ENCODE measurements at regions of chr6 and their contacts with region 1.

Region 1: GRCh38 chr6:107847844-107848802 is 24.0 kb upstream of the SCML4 start:
- DNase-seq: peak; percentile 86
- H3K4me3 Mint-ChIP-seq: peak overlapping the region; percentile 76
- H3K27ac Mint-ChIP-seq: peak overlapping the region; percentile 67
- H3K4me1 Mint-ChIP-seq: peaks cover 21% of the 10 kb centered on the region
- H3K27me3 Mint-ChIP-seq: no peaks in the 10 kb centered on the region

Region 2: DNA sequence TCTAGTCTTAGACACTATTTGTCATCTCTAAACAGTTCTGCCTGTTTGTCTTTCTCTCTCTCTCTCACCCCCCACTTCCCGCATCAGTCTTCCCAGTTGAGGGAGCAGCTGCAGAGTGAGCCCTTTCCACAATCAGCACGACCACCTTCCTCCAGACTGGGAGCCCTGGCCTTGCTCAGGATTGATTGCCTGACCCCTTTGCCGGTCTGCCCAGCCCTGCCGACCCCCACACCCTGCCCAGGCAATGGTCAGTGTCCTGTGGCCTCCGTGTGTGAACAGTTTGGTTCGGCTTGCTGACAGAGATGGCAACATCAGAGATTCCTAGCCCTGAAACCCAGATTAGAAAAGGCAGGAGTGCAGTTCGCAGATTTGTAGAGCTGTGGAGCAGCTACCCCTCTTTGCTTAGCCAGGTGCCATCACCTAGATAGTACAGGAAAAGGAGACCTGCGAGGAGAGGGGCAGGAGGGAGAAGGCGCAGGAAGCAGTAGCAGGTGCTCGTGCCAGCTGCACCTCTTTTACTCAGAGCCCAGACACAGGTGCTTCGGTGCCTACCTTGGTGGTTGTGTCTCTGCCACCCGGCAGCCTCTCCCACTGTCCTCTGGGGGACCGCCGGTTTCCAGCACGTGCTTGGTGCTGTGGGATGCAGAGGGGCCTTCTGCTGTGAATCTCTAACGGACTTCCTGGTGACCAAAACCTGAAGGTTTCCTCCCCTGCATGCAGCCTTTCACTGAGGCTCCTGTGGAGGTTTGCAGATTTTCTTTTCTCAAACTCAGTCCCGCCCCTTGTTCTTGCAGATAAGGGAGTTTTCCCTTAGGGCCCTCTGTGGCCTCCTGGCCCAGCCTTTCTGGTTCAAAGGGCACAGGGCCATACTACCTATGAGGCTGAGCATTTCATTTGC is 116.5 kb before region 1 on chr6:
- CTCF ChIA-PET with region 1: interaction called, 89 read pairs
- intact Hi-C with region 1: loop called (anchors 1 kb)
- DNase-seq: peak; percentile 43
- H3K4me3 Mint-ChIP-seq: peak overlapping the region; percentile 80
- H3K27ac Mint-ChIP-seq: peak overlapping the region; percentile 86
- H3K4me1 Mint-ChIP-seq: peaks cover 74% of the 10 kb centered on the region
- H3K27me3 Mint-ChIP-seq: no peaks in the 10 kb centered on the region

Region 3: DNA sequence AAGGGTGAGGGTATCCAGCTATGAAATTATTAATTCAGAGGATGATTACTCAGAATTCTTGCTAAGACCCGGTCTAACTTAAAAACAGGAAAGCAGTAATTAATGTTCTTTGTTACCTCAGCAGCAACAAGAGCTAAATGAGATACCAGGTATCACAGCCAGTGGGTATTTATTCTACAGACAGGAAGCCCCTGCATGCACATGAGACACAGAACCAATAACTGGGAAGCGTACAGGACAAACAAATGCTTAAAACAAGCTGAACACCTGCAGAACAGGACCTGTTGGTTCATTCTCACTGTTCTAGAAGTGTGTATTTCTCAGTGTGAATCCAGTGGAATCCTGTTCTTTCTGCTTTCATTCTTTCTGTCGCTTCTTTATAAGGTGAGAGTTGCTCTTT is 54.9 kb before region 1 on chr6:
- CTCF ChIA-PET with region 1: interaction called, 33 read pairs
- intact Hi-C with region 1: no loop called
- DNase-seq: no peak
- H3K4me3 Mint-ChIP-seq: peak overlapping the region; percentile 2
- H3K27ac Mint-ChIP-seq: no peak overlapping the region
- H3K4me1 Mint-ChIP-seq: peaks cover 72% of the 10 kb centered on the region
- H3K27me3 Mint-ChIP-seq: no peaks in the 10 kb centered on the region

Region 4: GRCh38 chr6:107806691-107807090 is 41.4 kb before region 1 on chr6:
- CTCF ChIA-PET with region 1: interaction called, 28 read pairs
- intact Hi-C with region 1: no loop called
- DNase-seq: no peak
- H3K4me3 Mint-ChIP-seq: no peak overlapping the region
- H3K27ac Mint-ChIP-seq: no peak overlapping the region
- H3K4me1 Mint-ChIP-seq: peaks cover 76% of the 10 kb centered on the region
- H3K27me3 Mint-ChIP-seq: no peaks in the 10 kb centered on the region

Region 5: DNA sequence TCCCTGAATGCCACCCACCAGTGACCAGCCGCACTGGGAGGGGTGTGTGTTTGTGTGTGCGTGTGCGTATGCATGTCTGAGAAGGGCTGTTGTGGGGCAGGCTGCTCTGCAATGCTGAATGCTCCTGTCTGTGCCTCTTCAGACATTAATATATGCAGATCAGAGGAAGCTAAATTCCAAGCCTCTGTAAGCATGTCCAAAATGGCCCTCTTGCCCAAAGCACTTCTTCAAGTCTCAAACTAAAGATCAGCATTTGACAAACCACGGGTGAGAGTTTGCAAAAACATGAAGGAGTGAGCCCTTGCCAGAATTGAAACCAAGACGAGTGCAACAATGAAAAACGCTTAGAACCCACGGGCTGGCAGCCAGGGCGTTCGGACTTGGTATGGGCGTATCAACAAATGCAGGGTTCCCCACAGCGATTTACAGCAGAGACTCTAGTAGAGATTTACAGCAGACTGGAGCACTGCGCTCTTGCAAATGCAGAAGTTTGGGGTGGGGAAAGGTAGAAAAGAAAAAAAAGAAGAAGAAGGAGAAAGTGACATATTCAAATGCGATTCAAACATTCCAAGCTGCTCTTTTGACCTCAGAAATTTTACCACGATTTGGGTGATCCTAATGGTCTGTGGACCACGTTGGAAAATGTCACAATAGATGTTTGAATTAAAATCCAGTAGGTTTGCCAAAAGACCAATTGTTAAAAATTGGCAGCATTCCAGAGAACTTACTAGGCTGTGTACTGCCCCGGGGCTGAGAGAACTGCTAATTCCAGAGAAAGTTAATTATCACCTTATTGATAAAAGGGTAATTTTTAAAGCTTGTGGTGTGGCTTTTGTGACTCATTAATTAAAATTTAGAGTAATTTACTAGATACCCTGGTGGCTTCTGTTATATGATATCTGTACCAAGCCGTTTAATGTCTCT is 27.5 kb before region 1 on chr6:
- CTCF ChIA-PET with region 1: interaction called, 73 read pairs
- intact Hi-C with region 1: loop called (anchors 1 kb)
- DNase-seq: peak; percentile 55
- H3K4me3 Mint-ChIP-seq: peak overlapping the region; percentile 88
- H3K27ac Mint-ChIP-seq: peak overlapping the region; percentile 98
- H3K4me1 Mint-ChIP-seq: peaks cover 83% of the 10 kb centered on the region
- H3K27me3 Mint-ChIP-seq: no peaks in the 10 kb centered on the region

Region 6: DNA sequence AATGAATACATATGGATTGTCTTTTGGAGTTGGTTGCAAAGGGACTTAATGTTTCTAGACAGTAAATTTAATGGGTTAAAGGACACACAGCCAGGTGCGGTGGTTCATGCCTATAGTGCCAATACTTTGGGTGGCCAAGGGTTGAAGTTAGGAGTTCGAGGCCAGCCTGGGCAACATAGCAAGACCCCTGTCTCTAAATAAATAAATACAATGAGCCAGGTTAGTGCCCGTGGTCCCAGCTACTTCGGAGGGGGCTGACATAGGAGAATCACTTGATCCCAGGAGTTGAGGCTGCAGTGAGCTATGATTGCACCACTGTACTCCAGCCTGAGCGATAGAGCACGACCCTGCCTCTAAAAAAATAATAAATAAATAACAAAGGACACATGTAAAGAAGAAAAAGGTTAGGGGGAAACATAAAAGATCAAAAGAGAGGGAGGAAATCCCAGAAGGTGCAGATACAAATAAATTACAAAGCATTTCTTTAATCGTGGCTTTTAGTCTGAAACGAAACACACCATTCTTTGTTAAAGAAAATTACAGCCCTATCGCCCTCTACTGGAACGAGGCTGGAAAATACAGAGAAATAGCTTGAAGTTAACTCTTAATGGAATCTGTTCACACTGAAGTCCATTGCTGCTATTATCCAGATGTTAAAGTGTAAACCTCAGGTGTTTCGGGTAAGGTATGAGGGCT is 18.6 kb after region 1 on chr6:
- CTCF ChIA-PET with region 1: interaction called, 51 read pairs
- intact Hi-C with region 1: loop called (anchors 2 kb)
- DNase-seq: peak; percentile 56
- H3K4me3 Mint-ChIP-seq: no peak overlapping the region
- H3K27ac Mint-ChIP-seq: no peak overlapping the region
- H3K4me1 Mint-ChIP-seq: peaks cover 35% of the 10 kb centered on the region
- H3K27me3 Mint-ChIP-seq: no peaks in the 10 kb centered on the region

Measured in activated naive CD4-positive, alpha-beta T cell treated with anti-CD3 and anti-CD28 coated beads for 36 hours (primary cell).